Naive thymus-derived CD4-positive, alpha-beta T cell (primary cell): ENCODE measurements at regions of chrX and their contacts with region 1.

Region 1: DNA sequence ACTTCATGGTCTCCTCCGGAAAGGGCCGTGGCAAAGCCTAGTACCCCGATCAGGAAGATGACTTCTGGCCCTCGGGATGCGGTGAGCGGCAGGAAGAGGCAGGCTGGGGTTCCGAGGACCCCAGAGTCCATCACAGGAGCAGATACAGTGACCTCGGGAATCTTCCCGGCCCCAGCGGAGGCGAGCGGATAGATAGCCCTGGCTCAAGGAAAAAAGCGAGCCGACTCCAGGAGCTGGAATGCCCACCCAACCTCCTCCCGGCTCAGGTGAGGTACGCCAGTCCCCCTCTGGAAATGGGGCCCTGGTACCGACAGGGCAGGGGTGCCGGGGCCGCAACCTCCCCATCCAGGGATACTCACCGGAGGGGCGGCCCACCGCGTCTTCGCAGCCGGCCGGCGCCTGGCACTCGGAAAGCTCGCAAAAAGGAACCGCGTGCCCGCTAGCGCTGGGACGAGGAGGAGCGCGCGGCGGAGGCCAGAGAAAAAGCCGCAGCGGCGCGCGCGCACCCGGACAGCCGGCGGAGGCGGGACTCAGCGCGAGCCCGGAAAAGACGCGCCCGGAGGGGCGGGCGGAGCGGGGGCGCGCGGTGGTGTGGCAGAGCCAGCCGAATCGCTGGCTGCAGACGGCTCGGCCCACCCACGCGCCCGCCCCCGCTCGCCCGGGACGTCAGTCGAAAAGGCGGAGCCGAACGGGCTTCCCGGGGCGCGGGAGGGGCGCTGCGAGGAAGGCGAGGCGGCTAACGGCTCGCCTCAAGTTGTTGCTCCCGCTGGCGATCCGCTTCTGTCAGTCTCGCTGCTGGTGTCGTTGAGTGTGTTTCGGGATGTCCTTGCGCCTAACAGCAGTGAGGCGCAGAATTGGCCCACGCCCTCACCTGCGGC is at the start of gene ACSL4:
- DNase-seq: peak; percentile 74 to 89 (median 84)
- ATAC-seq: peak; percentile 97
- H3K4me3 ChIP-seq: peak within 1 kb of the TSS; percentile 92
- H3K4me3 Mint-ChIP-seq: peak within 1 kb of the TSS; percentile 93 to 97 (median 96)
- H3K27ac ChIP-seq: peak within 1 kb of the TSS; percentile 86
- H3K27ac Mint-ChIP-seq: peak within 1 kb of the TSS; percentile 92 to 98 (median 94)
- H3K4me1 ChIP-seq: peaks cover 4 to 6% of the 10 kb centered on the region in 2 donors
- H3K4me1 Mint-ChIP-seq: peaks cover 13 to 36% (median 26%) of the 10 kb centered on the region in 7 donors
- H3K27me3 ChIP-seq: no peaks in the 10 kb centered on the region
- H3K27me3 Mint-ChIP-seq: no peaks in the 10 kb centered on the region
- total RNA-seq, gene ACSL4: 13.4 to 43.9 (median 21.6) TPM

Region 2: GRCh38 chrX:108091266-108091877 is 1641.6 kb before region 1 on chrX and contains the starts of genes ATG4A and PSMD10:
- CTCF ChIA-PET with region 1: no interaction called
- POLR2A ChIA-PET with region 1: no interaction called
- intact Hi-C with region 1: loop called in 1 of 2 experiments (anchors 10 kb)
- DNase-seq: peak; percentile 65 to 91 (median 85)
- ATAC-seq: peak; percentile 97
- H3K4me3 ChIP-seq: peak within 1 kb of the TSS; percentile 85
- H3K4me3 Mint-ChIP-seq: no peak within 1 kb of the TSS
- H3K27ac ChIP-seq: peak within 1 kb of the TSS; percentile 88
- H3K27ac Mint-ChIP-seq: no peak within 1 kb of the TSS
- H3K4me1 ChIP-seq: no peaks in the 10 kb centered on the region
- H3K4me1 Mint-ChIP-seq: peaks cover 0 to 28% (median 15%) of the 10 kb centered on the region in 7 donors
- H3K27me3 ChIP-seq: no peaks in the 10 kb centered on the region
- H3K27me3 Mint-ChIP-seq: no peaks in the 10 kb centered on the region
- total RNA-seq, gene ATG4A: 6.7 to 11.4 (median 7.5) TPM
- total RNA-seq, gene PSMD10: 17.6 to 36.8 (median 22.1) TPM

Region 3: DNA sequence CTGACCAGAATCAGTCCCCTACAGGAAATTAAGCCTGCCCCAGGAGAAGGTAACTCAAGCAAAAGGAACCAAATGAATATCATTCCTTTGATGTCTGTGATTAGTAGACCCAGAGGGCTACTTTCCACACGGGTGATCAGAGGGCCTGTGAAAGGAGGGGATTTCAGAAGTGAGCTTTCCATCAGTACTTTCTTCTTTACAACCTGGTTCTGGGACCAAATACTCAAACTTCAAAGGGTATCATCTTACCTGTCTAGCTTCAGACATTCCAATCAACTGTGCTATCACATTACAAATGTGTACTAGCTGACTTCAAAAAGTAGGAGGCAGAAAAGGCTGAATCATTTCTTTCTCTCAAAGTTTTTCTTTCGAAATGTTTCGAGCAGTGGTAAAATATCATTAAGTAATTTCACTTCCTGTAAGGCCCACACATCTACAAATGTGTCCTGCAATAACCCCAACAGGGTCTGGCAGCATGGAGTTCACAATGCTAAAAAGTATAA is 23.8 kb before region 1 on chrX:
- CTCF ChIA-PET with region 1: no interaction called
- POLR2A ChIA-PET with region 1: no interaction called
- intact Hi-C with region 1: loop called in 1 of 2 experiments (anchors 2 kb)
- DNase-seq: no peak
- ATAC-seq: peak; percentile 61
- H3K4me3 ChIP-seq: no peak overlapping the region
- H3K4me3 Mint-ChIP-seq: peak overlapping the region in 7 of 10 donors; percentile 2 to 82 (median 47)
- H3K27ac ChIP-seq: no peak overlapping the region
- H3K27ac Mint-ChIP-seq: peak overlapping the region in 1 of 9 donors; percentile 88
- H3K4me1 ChIP-seq: peaks cover 0 to 20% of the 10 kb centered on the region in 2 donors
- H3K4me1 Mint-ChIP-seq: peaks cover 12 to 63% (median 52%) of the 10 kb centered on the region in 7 donors
- H3K27me3 ChIP-seq: no peaks in the 10 kb centered on the region
- H3K27me3 Mint-ChIP-seq: no peaks in the 10 kb centered on the region

Region 4: DNA sequence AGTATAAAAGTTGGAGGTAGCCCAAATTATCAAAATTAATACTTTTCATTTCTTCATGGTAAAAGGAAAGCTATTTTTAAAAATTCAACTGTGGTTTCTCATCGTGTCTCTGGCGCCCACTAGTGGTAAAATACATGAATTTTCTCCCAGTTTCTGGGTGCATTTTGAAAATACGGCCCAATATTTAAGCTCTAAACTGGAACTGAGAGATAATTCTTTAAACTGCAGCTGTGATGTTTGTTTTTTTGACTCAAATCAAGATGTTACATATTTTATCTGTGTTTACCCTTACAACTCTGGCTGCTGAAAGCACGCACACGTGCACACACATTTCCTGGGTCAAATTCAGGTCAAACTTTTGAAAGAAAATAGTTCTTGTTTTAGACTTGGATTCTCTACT is 124.0 kb after region 1 on chrX:
- CTCF ChIA-PET with region 1: interaction called, 3 read pairs
- POLR2A ChIA-PET with region 1: no interaction called
- intact Hi-C with region 1: loop called in 1 of 2 experiments (anchors 1 kb)
- DNase-seq: peak in 6 of 9 donors; percentile 7 to 47 (median 42)
- ATAC-seq: no peak
- H3K4me3 ChIP-seq: no peak overlapping the region
- H3K4me3 Mint-ChIP-seq: peak overlapping the region in 1 of 10 donors; percentile 2
- H3K27ac ChIP-seq: no peak overlapping the region
- H3K27ac Mint-ChIP-seq: no peak overlapping the region
- H3K4me1 ChIP-seq: no peaks in the 10 kb centered on the region
- H3K4me1 Mint-ChIP-seq: peaks cover 0 to 2% (median 0%) of the 10 kb centered on the region in 7 donors
- H3K27me3 ChIP-seq: no peaks in the 10 kb centered on the region
- H3K27me3 Mint-ChIP-seq: no peaks in the 10 kb centered on the region

Region 5: DNA sequence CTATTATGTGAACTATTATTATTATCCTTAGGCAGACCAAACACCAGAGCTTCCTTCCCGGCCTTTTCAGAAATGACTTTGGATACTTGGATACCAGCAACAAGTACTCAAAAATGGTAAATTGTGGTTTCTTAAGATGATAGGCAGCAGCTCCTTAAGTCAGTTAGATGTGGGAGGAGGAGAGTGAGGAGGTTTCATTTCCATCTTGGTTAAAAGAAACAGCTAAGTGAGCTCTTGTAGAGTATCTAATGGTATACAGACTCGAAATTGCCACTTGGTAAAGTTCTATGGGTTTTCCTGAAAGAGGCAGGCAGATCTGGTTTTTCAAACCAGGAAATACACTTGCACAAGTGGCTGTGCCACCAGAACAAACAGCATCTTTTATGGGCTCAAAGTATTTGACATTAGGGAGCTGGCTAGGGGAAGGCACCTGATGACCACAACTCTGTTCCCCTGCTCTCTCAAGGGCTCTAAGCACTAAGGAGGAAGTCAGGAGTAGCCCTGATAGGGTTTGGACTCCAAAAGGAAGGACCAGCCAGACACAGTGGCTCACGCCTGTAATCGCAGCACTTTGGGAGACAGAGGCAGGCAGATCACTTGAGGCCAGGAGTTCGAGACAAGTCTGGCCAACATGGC is 400.8 kb after region 1 on chrX:
- CTCF ChIA-PET with region 1: no interaction called
- POLR2A ChIA-PET with region 1: interaction called, 10 read pairs
- intact Hi-C with region 1: no loop called
- DNase-seq: no peak
- ATAC-seq: no peak
- H3K4me3 ChIP-seq: no peak overlapping the region
- H3K4me3 Mint-ChIP-seq: no peak overlapping the region
- H3K27ac ChIP-seq: no peak overlapping the region
- H3K27ac Mint-ChIP-seq: peak overlapping the region in 3 of 9 donors; percentile 1 to 21 (median 13)
- H3K4me1 ChIP-seq: no peaks in the 10 kb centered on the region
- H3K4me1 Mint-ChIP-seq: peaks cover 0 to 8% (median 0%) of the 10 kb centered on the region in 7 donors
- H3K27me3 ChIP-seq: no peaks in the 10 kb centered on the region
- H3K27me3 Mint-ChIP-seq: no peaks in the 10 kb centered on the region

Region 6: DNA sequence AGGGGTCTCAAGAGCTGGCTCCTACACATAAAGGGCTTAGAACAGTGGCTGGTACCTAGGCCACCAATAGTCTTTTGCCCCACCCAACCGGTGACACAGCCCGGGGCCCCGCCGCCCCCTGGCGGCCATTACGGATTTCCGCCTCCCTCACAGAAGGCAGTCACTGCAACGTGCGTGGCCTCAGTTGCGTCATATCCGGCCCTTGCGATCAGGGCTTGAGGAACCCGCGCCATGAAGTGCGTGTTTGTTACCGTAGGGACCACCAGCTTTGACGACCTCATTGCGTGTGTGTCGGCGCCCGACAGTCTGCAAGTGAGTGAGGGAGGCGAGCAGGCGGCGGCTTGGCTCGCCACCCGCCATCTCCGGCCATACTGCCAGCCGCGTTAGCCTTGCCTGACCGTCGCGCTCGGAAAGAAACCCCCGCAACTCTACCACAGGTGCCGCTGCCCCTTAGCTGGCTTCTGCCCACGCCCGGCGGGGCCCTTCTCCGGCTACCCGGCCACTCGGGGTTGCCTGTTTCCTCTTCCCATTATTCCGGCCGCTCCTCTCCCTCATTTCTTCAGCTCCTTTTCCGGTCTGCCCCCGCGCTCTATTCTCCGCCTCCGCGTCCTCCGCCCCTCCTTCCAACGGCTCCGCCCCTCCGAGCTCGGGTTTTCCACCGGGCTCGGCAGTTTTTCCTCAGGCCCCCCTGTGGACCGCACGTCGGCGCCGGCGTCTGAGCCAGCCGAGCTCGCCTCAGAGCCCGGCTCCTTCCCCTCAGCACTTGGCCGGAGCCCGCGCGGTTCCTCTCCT is 1948.2 kb after region 1 on chrX and contains the start of gene ALG13:
- CTCF ChIA-PET with region 1: no interaction called
- POLR2A ChIA-PET with region 1: no interaction called
- intact Hi-C with region 1: loop called (anchors 2 to 10 kb)
- DNase-seq: peak; percentile 70 to 94 (median 89)
- ATAC-seq: peak; percentile 93
- H3K4me3 ChIP-seq: peak within 1 kb of the TSS; percentile 57
- H3K4me3 Mint-ChIP-seq: peak within 1 kb of the TSS; percentile 87 to 94 (median 89)
- H3K27ac ChIP-seq: peak within 1 kb of the TSS; percentile 98
- H3K27ac Mint-ChIP-seq: peak within 1 kb of the TSS; percentile 92 to 99 (median 98)
- H3K4me1 ChIP-seq: peaks cover 7 to 15% of the 10 kb centered on the region in 2 donors
- H3K4me1 Mint-ChIP-seq: peaks cover 14 to 44% (median 32%) of the 10 kb centered on the region in 7 donors
- H3K27me3 ChIP-seq: no peaks in the 10 kb centered on the region
- H3K27me3 Mint-ChIP-seq: no peaks in the 10 kb centered on the region
- total RNA-seq, gene ALG13: 48.4 to 223 (median 92.3) TPM